Heart left ventricle (tissue), 16 donors: ENCODE measurements at regions of chr3 and their contacts with region 1.

Region 1: GRCh38 chr3:195154793-195155535 is 116.0 kb downstream of the XXYLT1 start:
- DNase-seq: peak; percentile 90 to 92 (median 91)
- ATAC-seq: peak; percentile 62 to 82 (median 75)
- H3K4me3 ChIP-seq: no peak overlapping the region
- H3K27ac ChIP-seq: peak overlapping the region; percentile 41 to 92 (median 85)
- H3K4me1 ChIP-seq: peaks cover 14 to 80% (median 66%) of the 10 kb centered on the region in 12 donors
- H3K27me3 ChIP-seq: no peaks in the 10 kb centered on the region
- CTCF ChIP-seq: no peak
- POLR2A ChIP-seq: no peak

Region 2: GRCh38 chr3:195117978-195118581 is 36.9 kb before region 1 on chr3:
- intact Hi-C with region 1: loop called in 1 of 10 experiments (anchors 5 kb)
- DNase-seq: no peak
- ATAC-seq: peak in 2 of 4 donors; percentile 37 to 38
- H3K4me3 ChIP-seq: no peak overlapping the region
- H3K27ac ChIP-seq: peak overlapping the region in 4 of 12 donors; percentile 15 to 52 (median 33)
- H3K4me1 ChIP-seq: peaks cover 0 to 36% (median 17%) of the 10 kb centered on the region in 12 donors
- H3K27me3 ChIP-seq: no peaks in the 10 kb centered on the region
- CTCF ChIP-seq: peak in 7 of 12 donors; percentile 6 to 41 (median 28)
- POLR2A ChIP-seq: no peak

Region 3: GRCh38 chr3:195182470-195182795 is 27.5 kb after region 1 on chr3:
- intact Hi-C with region 1: loop called in 1 of 10 experiments (anchors 2 kb)
- DNase-seq: peak in 1 of 5 donors; percentile 59
- ATAC-seq: peak in 3 of 4 donors; percentile 48 to 67 (median 53)
- H3K4me3 ChIP-seq: no peak overlapping the region
- H3K27ac ChIP-seq: peak overlapping the region in 10 of 12 donors; percentile 24 to 85 (median 53)
- H3K4me1 ChIP-seq: peaks cover 3 to 90% (median 70%) of the 10 kb centered on the region in 12 donors
- H3K27me3 ChIP-seq: no peaks in the 10 kb centered on the region
- CTCF ChIP-seq: no peak
- POLR2A ChIP-seq: no peak

Region 4: GRCh38 chr3:195204360-195205163 is 49.6 kb after region 1 on chr3:
- intact Hi-C with region 1: loop called in 1 of 10 experiments (anchors 5 kb)
- DNase-seq: peak in 1 of 5 donors; percentile 16
- ATAC-seq: peak in 3 of 4 donors; percentile 17 to 54 (median 27)
- H3K4me3 ChIP-seq: no peak overlapping the region
- H3K27ac ChIP-seq: peak overlapping the region in 6 of 12 donors; percentile 1 to 38 (median 16)
- H3K4me1 ChIP-seq: peaks cover 0 to 40% (median 31%) of the 10 kb centered on the region in 12 donors
- H3K27me3 ChIP-seq: no peaks in the 10 kb centered on the region
- CTCF ChIP-seq: no peak
- POLR2A ChIP-seq: no peak

Region 5: DNA sequence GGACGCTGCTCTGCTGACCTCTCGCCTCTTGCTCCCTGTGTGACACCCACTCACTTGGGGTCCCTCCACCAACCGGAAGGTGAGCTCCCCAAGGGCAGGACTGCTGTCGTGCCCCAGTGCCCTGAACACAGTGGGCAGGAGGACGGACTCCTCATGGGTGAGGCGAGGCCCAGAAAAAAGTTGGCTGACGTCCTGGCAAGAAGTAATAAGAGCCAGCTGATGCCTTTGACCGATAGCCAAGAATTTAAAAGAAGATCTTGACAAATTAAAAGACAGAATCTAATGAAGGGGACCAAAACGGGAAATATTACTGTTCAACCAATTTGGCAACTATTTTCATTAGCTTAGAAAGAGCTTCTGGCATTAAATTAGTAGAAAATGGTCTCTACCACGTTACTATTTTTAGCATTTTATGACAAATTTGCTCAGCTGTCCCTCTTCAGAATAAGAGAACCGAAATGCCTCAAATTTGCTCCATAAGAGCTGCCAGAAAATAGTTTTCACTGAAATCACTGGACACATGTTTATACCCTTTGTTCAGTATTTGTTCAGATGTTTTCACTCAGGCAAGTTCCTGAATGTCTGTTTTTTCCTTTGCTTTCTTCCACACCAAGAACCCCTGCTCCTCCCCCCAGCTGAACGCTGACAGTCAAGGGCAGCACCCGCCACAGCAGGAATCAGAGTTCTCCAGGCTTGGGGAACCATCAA is 55.5 kb after region 1 on chr3:
- intact Hi-C with region 1: loop called in 2 of 10 experiments (anchors 2 to 5 kb)
- DNase-seq: peak in 4 of 5 donors; percentile 40 to 73 (median 59)
- ATAC-seq: peak; percentile 49 to 76 (median 64)
- H3K4me3 ChIP-seq: peak overlapping the region in 2 of 12 donors; percentile 23 to 24
- H3K27ac ChIP-seq: peak overlapping the region; percentile 57 to 94 (median 82)
- H3K4me1 ChIP-seq: peaks cover 0 to 40% (median 34%) of the 10 kb centered on the region in 12 donors
- H3K27me3 ChIP-seq: no peaks in the 10 kb centered on the region
- CTCF ChIP-seq: no peak
- POLR2A ChIP-seq: no peak

Region 6: DNA sequence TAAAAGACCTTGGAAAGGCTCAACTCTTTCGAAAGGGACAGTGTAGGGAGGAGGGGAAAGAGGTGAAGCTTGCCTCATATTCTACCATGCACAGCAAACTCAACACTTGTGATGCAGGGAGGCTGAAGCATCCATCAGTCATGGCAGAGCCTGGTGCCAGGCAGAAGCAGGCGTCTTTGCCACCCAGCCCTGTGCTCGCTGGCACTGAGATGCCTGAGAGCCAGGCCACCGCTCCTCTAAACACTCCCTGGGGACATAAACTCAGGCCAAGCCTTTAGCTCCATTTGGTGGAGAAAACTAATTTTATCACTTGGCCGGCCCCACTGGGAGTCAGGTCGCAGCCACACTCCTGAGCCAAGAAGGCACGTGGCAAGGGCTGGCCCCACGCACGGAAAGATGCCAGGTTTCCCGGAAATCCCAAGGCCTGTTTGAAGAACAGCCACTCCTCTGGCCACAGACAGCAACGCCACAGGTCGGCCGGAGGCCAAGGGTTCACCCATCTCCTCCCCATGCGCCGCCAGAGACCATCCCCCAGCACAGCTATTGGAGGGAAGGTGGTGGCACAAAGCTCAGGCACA is 85.3 kb after region 1 on chr3:
- intact Hi-C with region 1: loop called in 1 of 10 experiments (anchors 5 kb)
- DNase-seq: peak in 3 of 5 donors; percentile 54 to 76 (median 62)
- ATAC-seq: peak; percentile 44 to 78 (median 59)
- H3K4me3 ChIP-seq: no peak overlapping the region
- H3K27ac ChIP-seq: peak overlapping the region in 4 of 12 donors; percentile 3 to 89 (median 24)
- H3K4me1 ChIP-seq: peaks cover 0 to 27% (median 15%) of the 10 kb centered on the region in 12 donors
- H3K27me3 ChIP-seq: no peaks in the 10 kb centered on the region
- CTCF ChIP-seq: no peak
- POLR2A ChIP-seq: no peak